ENCODE measurements at regions of chr9 and their contacts with region 1.

Region 1: DNA sequence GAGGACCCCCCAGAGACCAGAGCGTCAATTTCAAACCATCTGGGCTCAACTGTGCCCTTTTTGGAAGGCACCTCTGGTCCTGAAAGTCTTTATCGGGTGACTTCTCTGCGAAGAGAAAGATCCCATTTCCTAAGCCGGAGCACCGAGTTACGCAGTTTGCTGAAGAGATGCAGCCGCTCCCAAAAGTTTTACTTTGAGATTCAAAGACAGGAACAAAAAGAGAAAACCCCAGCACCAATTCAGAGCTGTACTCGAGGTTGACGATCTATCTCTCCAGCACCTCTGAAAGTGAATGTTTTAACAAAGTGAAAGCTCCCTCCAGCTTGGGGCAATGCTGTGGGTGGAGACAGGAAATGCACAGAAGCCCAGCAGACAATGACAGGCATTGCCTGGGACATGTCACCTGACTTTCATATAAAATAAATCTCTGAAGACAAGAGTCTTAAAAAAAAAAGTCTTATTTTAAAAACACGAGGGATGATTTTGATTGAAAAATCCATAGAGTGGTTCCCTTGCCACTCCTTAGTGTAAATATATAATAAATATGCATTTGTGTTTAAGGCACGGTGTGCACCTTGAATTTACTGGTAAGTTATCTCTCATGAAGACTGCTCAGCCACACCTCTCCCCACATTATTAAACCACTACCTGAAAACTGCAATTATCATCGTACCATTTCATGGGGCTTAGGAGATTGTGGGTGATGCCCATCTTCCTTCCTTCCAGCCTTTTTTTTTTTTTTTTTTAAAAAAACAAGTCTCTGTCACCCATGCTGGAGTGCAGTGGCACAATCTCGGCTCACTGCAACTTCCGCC is 79.9 kb downstream of the FNBP1 start:
- DNase-seq: peak; percentile 49
- ATAC-seq: peak; percentile 97
- H3K4me3 Mint-ChIP-seq: peak overlapping the region; percentile 86
- H3K27ac Mint-ChIP-seq: peak overlapping the region; percentile 98
- H3K4me1 Mint-ChIP-seq: peaks cover 52% of the 10 kb centered on the region
- H3K27me3 Mint-ChIP-seq: no peaks in the 10 kb centered on the region

Region 2: GRCh38 chr9:129868916-129869486 is 94.1 kb before region 1 on chr9:
- POLR2A ChIA-PET with region 1: interaction called, 10 read pairs
- DNase-seq: peak; percentile 88
- ATAC-seq: peak; percentile 88
- H3K4me3 Mint-ChIP-seq: peak overlapping the region; percentile 60
- H3K27ac Mint-ChIP-seq: peak overlapping the region; percentile 90
- H3K4me1 Mint-ChIP-seq: peaks cover 55% of the 10 kb centered on the region
- H3K27me3 Mint-ChIP-seq: no peaks in the 10 kb centered on the region

Region 3: DNA sequence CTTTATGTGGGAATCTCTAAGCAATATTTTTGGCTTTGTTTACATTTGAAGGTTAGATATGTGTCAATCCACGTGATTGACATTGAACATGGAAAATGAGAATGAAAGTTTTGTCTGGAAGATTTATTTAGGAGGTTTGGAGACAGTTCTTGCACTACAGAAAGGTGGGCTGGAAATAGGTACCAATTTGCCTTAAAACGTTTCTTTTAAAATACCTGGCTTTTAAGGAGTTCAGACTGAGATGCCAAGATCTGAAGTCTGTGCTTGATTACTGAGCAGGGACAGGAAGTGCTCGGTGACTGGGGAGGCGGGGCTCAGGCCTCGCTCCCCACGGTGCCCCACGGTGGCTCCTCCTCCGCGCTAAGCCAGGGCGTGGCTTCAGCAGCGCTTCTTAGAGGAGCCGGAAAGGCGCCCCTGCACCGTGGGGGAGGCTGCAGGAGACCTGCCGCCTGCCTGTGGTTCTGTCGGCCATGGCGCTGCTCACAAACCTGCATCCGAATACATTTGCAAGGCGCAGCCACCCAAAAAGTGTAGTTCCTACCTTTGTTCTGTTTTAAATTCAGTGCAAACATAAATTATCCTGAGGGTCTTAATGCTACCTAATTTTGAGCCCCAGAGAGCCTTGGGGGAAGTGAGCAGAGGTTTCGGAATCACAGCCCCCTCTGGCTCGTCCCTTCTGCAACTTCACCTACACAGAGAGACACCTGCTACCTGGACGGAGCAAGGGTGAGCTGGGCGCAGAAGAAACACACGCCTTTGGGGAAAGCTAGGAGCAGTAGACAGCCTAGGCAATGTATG is 78.7 kb before region 1 on chr9:
- POLR2A ChIA-PET with region 1: interaction called, 25 read pairs
- DNase-seq: peak; percentile 96
- ATAC-seq: peak; percentile 58
- H3K4me3 Mint-ChIP-seq: peak overlapping the region; percentile 91
- H3K27ac Mint-ChIP-seq: peak overlapping the region; percentile 97
- H3K4me1 Mint-ChIP-seq: peaks cover 45% of the 10 kb centered on the region
- H3K27me3 Mint-ChIP-seq: no peaks in the 10 kb centered on the region

Region 4: GRCh38 chr9:129894120-129894823 is 68.8 kb before region 1 on chr9:
- POLR2A ChIA-PET with region 1: interaction called, 25 read pairs
- DNase-seq: no peak
- ATAC-seq: peak; percentile 23
- H3K4me3 Mint-ChIP-seq: peak overlapping the region; percentile 67
- H3K27ac Mint-ChIP-seq: peak overlapping the region; percentile 92
- H3K4me1 Mint-ChIP-seq: peaks cover 65% of the 10 kb centered on the region
- H3K27me3 Mint-ChIP-seq: no peaks in the 10 kb centered on the region

Region 5: DNA sequence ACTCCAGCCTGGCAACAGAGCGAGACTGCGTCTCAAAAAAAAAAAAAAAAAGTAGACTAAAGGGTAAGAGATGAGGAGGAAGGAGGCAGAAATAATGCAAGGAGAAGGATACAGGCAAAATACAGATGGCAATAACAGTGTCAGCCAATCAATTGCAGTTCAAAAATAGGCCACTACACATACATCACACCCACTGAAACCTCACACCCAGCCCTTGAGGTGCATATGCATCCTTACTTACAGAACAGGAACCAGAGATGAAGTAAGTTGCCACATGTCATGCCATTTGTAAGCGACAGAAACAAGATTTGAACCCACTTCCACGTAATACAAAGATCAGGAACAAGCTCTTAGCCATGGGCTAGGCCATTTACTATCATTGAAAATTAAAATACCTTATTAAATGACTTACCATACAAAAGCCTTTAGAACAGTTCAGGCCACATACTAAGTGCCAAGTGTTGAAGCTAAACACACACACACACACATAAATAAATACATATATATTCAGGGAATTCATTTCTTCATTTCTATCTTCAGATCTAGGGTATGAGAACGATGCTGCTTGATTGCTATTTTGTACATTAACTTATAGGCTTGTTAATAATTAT is 18.5 kb before region 1 on chr9:
- POLR2A ChIA-PET with region 1: interaction called, 19 read pairs
- DNase-seq: no peak
- ATAC-seq: peak; percentile 97
- H3K4me3 Mint-ChIP-seq: peak overlapping the region; percentile 68
- H3K27ac Mint-ChIP-seq: peak overlapping the region; percentile 90
- H3K4me1 Mint-ChIP-seq: peaks cover 38% of the 10 kb centered on the region
- H3K27me3 Mint-ChIP-seq: no peaks in the 10 kb centered on the region

Region 6: GRCh38 chr9:130018260-130018659 is 55.2 kb after region 1 on chr9:
- POLR2A ChIA-PET with region 1: no interaction called
- DNase-seq: no peak
- ATAC-seq: no peak
- H3K4me3 Mint-ChIP-seq: no peak overlapping the region
- H3K27ac Mint-ChIP-seq: no peak overlapping the region
- H3K4me1 Mint-ChIP-seq: peaks cover 24% of the 10 kb centered on the region
- H3K27me3 Mint-ChIP-seq: no peaks in the 10 kb centered on the region

Region 7: GRCh38 chr9:130053504-130054324 is 90.6 kb after region 1 on chr9 and contains the start of gene GPR107:
- POLR2A ChIA-PET with region 1: interaction called, 12 read pairs
- DNase-seq: peak; percentile 86
- ATAC-seq: peak; percentile 94
- H3K4me3 Mint-ChIP-seq: peak within 1 kb of the TSS; percentile 96
- H3K27ac Mint-ChIP-seq: peak within 1 kb of the TSS; percentile 90
- H3K4me1 Mint-ChIP-seq: peaks cover 18% of the 10 kb centered on the region
- H3K27me3 Mint-ChIP-seq: no peaks in the 10 kb centered on the region
- total RNA-seq, gene GPR107: 23.2 to 25.1 TPM

Measured in activated naive CD8-positive, alpha-beta T cell treated with anti-CD3 and anti-CD28 coated beads, Interleukin-2, amount 10 ng/mL, durations not matched to agents 7 days and 5 days (primary cell).